Left colon (tissue), 2 donors: ENCODE measurements at regions of chr17 and their contacts with region 1.

Region 1: DNA sequence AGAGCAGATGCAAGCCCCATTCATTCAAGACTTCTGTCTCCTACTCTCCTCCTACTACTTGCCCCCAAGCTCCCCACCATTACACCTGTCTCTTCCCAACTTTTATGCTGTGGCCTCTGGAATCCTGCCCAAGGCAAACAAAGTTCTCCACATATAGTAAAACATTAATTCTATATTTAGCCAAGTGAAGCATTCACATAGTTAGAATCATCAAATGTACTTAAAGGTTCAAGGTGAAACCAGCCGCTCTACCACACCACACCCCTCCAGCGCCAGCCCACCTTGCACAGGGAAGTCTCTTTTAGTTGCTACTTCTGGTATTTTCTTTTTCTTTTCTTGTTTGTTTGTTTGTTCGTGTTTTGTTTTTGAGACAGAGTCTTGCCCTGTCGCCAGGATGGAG is 25.4 kb upstream of the GUCY2D start:
- DNase-seq: peak in 1 of 2 donors; percentile 61
- ATAC-seq: peak; percentile 92

Region 2: GRCh38 chr17:7944326-7944725 is 32.7 kb before region 1 on chr17:
- intact Hi-C with region 1: loop called in 1 of 2 experiments (anchors 5 kb)
- DNase-seq: no peak
- ATAC-seq: no peak

Region 3: DNA sequence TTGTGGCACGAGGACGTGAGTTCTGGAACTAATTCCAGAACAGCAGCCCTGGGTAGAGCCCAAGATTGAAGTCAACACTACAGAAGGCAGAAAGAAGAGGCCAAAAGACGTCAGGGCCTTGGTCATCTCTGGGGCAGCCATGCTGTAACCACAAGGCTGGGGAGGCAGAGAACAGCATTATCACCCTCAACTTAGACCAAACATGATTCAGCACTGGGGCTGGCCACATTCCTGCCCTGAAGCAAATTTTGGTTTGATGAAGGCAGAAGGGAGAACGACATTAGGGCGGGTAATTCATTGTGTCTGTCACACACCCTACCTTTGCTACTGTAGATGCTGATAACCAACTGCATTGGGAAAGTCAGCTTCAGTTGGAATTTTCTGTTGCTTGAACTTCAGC is 52.1 kb after region 1 on chr17:
- intact Hi-C with region 1: no loop called
- DNase-seq: no peak
- ATAC-seq: no peak

Region 4: GRCh38 chr17:8080208-8080798 is 103.3 kb after region 1 on chr17:
- intact Hi-C with region 1: no loop called
- DNase-seq: no peak
- ATAC-seq: no peak